WTC11 (cell line): ENCODE measurements at regions of chr19 and their contacts with region 1.

Region 1: DNA sequence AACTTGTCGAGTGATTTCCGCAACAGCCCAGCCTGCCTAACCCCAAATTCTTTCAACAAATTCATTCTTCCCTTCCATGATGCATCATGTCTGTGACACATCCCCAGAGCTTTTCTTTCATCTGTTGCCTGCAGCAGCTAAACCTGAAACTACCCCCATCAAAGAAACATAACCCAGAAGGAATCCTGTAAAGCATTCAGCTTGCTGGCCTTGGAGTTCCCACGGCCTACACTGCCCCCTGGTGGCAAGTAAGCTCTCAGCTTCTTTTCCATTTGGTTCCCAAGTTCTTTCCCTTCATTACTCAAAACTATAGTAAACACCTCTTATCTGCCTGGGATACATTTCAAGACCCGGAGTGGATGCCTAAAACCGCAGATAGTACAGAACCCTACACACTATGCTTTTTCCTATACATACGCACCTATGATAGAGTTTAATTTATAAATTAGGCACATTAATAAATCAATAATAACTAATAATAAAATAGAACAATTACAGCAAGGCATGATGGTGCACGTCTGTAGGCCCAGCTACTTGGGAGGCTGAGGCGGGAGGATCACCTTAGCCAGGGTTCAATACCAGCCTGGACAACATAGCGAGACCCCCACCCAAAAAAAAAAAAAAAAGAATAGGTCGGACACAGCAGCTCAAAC is 7.4 kb downstream of the ETHE1 start:
- DNase-seq: peak; percentile 83
- ATAC-seq: no peak; the same call in 1 of the 2 replicates
- H3K4me3 Mint-ChIP-seq: no peak overlapping the region
- H3K27ac Mint-ChIP-seq: peak overlapping the region; percentile 32; the same call in 1 of the 2 replicates
- H3K4me1 Mint-ChIP-seq: peaks cover 3% of the 10 kb centered on the region
- H3K27me3 Mint-ChIP-seq: no peaks in the 10 kb centered on the region
- CTCF ChIP-seq: peak; percentile 92

Region 2: DNA sequence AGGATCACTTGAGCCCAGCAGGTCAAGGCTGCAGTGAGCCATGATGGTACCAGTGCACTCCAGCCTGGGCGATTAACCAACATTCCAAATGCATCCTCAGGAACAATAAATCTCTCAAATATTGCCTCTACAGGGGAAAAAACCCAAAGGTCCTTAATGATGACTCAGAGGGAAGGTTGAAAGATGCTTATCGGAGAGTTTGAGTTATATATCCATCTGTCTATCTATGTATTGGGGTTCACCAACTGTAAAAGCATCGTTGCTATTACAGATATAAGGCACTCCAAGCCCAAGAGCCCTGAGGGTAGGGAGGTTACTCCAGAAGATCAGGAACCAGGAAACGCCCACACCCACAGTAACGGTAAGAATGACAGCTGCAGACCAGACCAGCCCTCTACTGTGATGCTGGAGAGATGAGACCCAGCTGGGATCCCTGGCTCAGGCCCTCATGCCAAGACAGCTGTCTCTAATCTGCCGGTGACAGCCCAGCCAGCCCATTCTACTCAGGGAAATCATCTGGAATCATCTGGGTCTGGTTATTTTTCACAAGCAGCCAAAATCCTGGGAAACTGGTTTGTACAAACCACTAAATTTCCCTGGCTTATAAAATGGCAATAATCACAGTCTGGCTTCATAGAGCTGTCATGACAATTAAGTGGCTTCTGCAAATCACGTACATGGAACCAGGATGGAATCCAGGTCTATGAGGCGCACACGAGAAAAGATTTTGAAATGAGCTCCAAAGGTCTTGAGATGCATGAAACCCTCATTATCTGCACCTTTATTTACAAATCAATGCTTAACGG is 81.1 kb before region 1 on chr19:
- CTCF ChIA-PET with region 1: interaction called, 15 read pairs
- POLR2A ChIA-PET with region 1: no interaction called
- DNase-seq: no peak
- ATAC-seq: no peak
- H3K4me3 Mint-ChIP-seq: no peak overlapping the region
- H3K27ac Mint-ChIP-seq: no peak overlapping the region
- H3K4me1 Mint-ChIP-seq: peaks cover 4% of the 10 kb centered on the region; the same call in 1 of the 2 replicates
- H3K27me3 Mint-ChIP-seq: peaks cover 3% of the 10 kb centered on the region; the same call in 1 of the 2 replicates
- CTCF ChIP-seq: no peak

Region 3: GRCh38 chr19:43457809-43458208 is 61.8 kb before region 1 on chr19:
- CTCF ChIA-PET with region 1: interaction called, 23 read pairs
- POLR2A ChIA-PET with region 1: no interaction called
- DNase-seq: no peak
- ATAC-seq: no peak
- H3K4me3 Mint-ChIP-seq: no peak overlapping the region
- H3K27ac Mint-ChIP-seq: no peak overlapping the region
- H3K4me1 Mint-ChIP-seq: peaks cover 19% of the 10 kb centered on the region
- H3K27me3 Mint-ChIP-seq: peaks cover 33% of the 10 kb centered on the region
- CTCF ChIP-seq: no peak

Region 4: GRCh38 chr19:43495082-43495481 is 24.5 kb before region 1 on chr19:
- CTCF ChIA-PET with region 1: interaction called, 13 read pairs
- POLR2A ChIA-PET with region 1: no interaction called
- DNase-seq: no peak
- ATAC-seq: no peak
- H3K4me3 Mint-ChIP-seq: no peak overlapping the region
- H3K27ac Mint-ChIP-seq: no peak overlapping the region
- H3K4me1 Mint-ChIP-seq: no peaks in the 10 kb centered on the region
- H3K27me3 Mint-ChIP-seq: no peaks in the 10 kb centered on the region; the same call in 1 of the 2 replicates
- CTCF ChIP-seq: no peak

Region 5: DNA sequence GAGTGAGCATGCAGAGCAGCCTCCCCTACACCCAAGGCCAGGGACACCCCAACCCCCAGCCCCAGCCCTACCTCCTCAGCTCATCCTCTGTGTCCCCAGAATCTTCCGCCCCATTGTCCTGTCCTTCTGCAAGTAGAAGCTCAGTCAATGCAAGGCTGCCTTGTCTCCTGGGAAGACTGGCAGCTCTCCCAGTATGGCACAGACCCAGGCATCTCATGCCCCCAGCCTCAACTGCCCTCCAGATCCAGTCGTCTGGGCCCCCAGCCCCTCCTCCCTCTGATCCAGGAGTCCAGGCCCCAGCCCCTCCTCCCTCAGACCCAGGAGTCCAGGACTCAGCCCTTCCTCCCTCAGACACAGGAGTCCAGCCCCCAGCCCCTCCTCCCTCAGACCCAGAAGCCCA is 26.4 kb after region 1 on chr19:
- CTCF ChIA-PET with region 1: no interaction called
- POLR2A ChIA-PET with region 1: no interaction called
- DNase-seq: no peak
- ATAC-seq: no peak
- H3K4me3 Mint-ChIP-seq: no peak overlapping the region
- H3K27ac Mint-ChIP-seq: no peak overlapping the region
- H3K4me1 Mint-ChIP-seq: no peaks in the 10 kb centered on the region
- H3K27me3 Mint-ChIP-seq: no peaks in the 10 kb centered on the region
- CTCF ChIP-seq: no peak